Posterior vena cava (tissue), 2 donors: ENCODE measurements at regions of chr5 and their contacts with region 1.

Region 1: DNA sequence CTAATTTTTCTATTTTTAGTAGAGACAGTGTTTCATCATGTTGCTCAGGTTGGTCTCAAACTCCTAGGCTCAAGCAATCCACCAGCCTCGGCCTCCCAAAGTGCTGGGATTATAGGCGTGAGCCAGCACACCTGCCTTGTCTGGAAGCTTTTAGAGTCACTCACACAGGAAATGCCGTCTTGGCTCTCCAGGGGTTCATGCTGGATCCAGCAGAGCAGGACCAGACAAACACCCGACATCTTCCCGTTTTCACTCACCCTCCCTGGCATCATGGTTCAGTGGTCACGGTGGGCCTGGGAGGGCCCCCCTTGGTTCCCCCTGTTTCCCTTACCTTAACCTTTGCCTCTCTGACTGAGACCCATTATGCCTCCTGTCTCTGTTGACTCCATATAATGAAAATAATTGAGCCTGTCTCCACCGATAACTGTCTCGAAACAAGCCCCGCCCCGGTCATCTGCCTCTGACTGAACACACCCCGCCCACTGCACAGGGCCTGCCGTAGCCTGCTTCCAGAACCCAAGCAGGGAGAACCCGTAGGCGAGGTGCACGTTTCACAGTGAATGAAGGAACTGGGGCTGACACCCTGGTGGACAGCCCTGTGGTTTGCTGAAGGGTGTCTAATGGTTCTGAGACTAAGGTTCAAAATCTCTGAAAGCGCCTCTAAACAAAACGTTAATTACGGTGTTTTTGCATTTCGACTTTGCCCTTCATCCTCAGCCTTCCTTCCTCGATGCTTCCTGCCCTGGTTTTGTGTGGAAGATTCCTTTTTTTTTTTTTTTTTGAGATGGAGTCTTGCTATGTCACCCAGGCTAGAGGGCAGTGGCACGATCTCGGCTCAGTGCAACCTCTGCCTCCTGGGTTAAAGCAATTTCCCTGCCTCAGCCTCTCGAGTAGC is 39.7 kb upstream of the SPRY4 start:
- DNase-seq: no peak

Region 2: DNA sequence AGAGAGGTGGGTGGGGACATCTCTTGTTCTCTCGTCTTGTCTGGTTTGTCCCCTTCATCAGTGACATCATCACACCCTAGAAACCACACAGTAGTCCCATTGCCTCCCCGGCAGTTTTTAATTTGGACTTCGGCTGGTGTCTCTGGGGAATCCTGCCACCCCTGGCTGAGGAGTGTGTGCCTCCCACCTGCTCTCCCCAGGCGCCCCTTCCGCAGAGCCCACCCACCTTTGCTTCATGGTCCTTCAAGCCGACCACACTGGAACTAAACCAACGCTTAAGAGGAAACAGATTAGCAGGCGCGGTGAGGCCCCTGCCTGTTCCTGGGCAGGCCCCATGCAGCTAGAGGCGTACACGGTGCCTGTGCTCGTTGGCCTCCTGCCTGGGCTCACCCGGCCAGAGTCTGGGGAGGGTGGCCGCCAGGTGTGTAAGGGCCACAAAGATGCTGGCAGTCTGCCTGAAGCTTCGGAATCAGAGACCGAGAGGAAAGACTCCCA is 67.9 kb after region 1 on chr5:
- intact Hi-C with region 1: loop called in 1 of 2 experiments (anchors 10 kb)
- DNase-seq: no peak

Region 3: GRCh38 chr5:143605403-143606005 is 1241.0 kb after region 1 on chr5:
- intact Hi-C with region 1: no loop called
- DNase-seq: no peak

Region 4: GRCh38 chr5:143733665-143734455 is 1369.4 kb after region 1 on chr5:
- intact Hi-C with region 1: loop called in 1 of 2 experiments (anchors 5 kb)
- DNase-seq: no peak